Activated CD8-positive, alpha-beta memory T cell treated with anti-CD3 and anti-CD28 coated beads, Interleukin-2, amount 10 ng/mL, durations not matched to agents 7 days and 5 days (primary cell): ENCODE measurements at regions of chr1 and their contacts with region 1.

Region 1: DNA sequence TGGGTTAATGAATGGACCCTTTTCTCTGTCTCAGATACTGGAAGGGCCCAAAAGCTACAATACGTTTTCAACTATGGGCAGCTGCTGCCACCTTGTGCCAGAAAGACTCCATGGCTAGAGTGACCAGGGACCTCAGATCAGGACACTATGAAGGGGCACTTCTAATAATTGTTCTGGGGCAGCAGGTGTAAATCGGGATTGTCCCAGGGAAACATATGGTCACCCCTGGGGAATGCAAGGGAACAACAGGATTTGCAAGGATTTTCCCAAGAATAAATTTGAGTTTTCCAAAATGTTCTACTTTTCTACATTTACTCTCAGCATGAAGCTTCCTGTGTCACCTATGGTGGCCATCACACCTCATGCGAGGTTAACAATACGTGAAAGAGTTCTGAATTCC is 12.0 kb upstream of the FCAMR start:
- DNase-seq: peak; percentile 74
- ATAC-seq: peak; percentile 85
- H3K4me3 Mint-ChIP-seq: no peak overlapping the region
- H3K27ac Mint-ChIP-seq: no peak overlapping the region
- H3K4me1 Mint-ChIP-seq: no peaks in the 10 kb centered on the region
- H3K27me3 Mint-ChIP-seq: peaks cover 40% of the 10 kb centered on the region

Region 2: GRCh38 chr1:206635080-206635977 is 346.9 kb before region 1 on chr1 and contains the start of gene DYRK3:
- CTCF ChIA-PET with region 1: interaction called, 13 read pairs
- DNase-seq: peak; percentile 96
- ATAC-seq: peak; percentile 93
- H3K4me3 Mint-ChIP-seq: peak within 1 kb of the TSS; percentile 76
- H3K27ac Mint-ChIP-seq: peak within 1 kb of the TSS; percentile 91
- H3K4me1 Mint-ChIP-seq: peaks cover 33% of the 10 kb centered on the region
- H3K27me3 Mint-ChIP-seq: peaks cover 19% of the 10 kb centered on the region
- total RNA-seq, gene DYRK3: 9.5 to 12.7 TPM

Region 3: DNA sequence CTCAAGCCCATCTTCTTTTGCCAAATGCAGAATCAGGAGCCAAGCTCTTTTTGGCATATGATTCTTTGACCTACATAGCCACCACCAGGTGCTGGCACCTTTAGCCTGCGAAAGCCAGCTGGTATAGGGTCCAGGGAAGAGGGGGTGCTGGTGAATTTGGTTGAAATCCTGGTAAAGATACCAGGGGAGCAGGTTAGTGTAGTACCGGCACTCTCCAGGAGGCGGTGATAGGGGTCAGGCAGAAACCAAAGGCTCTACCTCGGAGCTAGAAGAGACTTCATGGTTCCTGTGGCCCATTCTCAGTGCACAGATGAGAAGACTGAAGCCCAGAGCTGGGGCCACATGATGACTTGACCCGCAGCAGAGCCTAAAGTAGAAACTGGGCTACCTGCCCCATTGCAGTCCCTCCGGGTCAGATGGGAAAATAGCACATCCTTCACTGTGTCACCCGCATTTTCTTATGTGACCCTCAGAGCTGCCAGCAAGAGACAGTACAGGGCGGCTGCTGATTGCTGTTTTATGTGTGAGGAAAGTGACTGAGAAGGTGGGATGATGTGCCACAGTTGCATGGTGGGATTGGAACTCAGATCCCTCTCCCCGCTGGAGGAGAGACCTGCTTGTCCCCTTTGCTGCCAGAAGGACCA is 247.6 kb before region 1 on chr1:
- CTCF ChIA-PET with region 1: interaction called, 27 read pairs
- DNase-seq: peak; percentile 83
- ATAC-seq: peak; percentile 31
- H3K4me3 Mint-ChIP-seq: no peak overlapping the region
- H3K27ac Mint-ChIP-seq: peak overlapping the region; percentile 21
- H3K4me1 Mint-ChIP-seq: peaks cover 70% of the 10 kb centered on the region
- H3K27me3 Mint-ChIP-seq: no peaks in the 10 kb centered on the region

Region 4: DNA sequence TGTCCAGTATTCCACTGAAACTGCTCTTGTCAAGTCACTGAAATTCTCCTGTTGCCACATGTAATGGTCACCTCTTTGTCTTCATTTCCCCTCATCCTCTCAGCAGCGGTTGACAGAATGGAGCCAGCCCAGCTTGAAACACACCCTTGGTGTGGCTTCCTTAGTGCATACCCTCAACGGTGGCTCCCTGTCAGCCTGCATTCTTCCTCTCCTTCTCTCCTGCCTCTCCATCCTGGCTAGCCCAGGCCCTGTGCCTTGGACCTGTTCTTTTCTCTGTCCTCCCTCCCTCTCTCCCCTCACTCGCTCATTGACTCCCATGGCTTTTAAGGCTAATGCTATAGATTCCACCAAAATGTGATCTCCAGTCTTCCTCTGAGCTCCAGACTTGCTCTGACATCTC is 64.1 kb before region 1 on chr1:
- CTCF ChIA-PET with region 1: interaction called, 79 read pairs
- DNase-seq: no peak
- ATAC-seq: no peak
- H3K4me3 Mint-ChIP-seq: peak overlapping the region; percentile 2
- H3K27ac Mint-ChIP-seq: peak overlapping the region; percentile 10
- H3K4me1 Mint-ChIP-seq: peaks cover 41% of the 10 kb centered on the region
- H3K27me3 Mint-ChIP-seq: no peaks in the 10 kb centered on the region

Region 5: GRCh38 chr1:206935491-206936067 is 46.6 kb before region 1 on chr1:
- CTCF ChIA-PET with region 1: interaction called, 124 read pairs
- DNase-seq: peak; percentile 64
- ATAC-seq: peak; percentile 74
- H3K4me3 Mint-ChIP-seq: no peak overlapping the region
- H3K27ac Mint-ChIP-seq: no peak overlapping the region
- H3K4me1 Mint-ChIP-seq: peaks cover 13% of the 10 kb centered on the region
- H3K27me3 Mint-ChIP-seq: no peaks in the 10 kb centered on the region

Region 6: DNA sequence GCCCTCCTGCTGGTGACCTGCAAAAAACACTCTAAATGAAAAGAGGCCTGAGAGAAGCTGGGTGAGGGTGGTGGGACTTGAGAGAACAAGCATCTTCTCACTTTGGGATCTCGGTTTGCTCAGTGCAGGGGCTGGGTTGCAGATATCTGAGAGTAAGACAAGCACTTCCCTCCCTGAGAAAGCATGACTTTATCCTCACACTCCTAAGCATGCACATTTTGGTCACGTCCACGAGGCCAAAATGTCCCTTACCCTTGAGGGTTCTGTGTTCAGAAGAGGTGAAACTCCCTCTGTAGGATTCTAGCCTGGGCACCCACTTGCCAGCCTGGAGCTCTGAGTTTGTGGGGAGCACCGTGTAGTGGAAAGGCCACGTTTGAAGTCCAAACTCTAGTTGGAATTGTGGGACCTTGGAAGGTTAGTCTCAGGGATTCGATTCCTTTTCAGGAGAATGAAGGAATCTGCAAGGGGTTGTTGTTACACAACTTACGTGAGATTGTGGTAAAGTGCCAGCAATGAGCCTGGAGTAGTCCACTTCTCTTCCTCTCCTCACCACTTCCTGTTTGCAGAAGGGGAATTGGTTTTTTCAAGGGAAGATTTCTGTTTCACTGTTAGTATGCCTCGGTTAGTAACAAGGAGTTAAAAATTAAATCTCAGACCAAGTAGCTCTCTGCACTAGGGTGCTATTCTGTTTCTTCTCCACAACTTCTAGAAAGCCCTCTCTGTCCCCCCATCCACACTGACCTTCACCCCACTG is 14.9 kb before region 1 on chr1:
- CTCF ChIA-PET with region 1: interaction called, 47 read pairs
- DNase-seq: no peak
- ATAC-seq: peak; percentile 39
- H3K4me3 Mint-ChIP-seq: peak overlapping the region; percentile 40
- H3K27ac Mint-ChIP-seq: peak overlapping the region; percentile 50
- H3K4me1 Mint-ChIP-seq: peaks cover 35% of the 10 kb centered on the region
- H3K27me3 Mint-ChIP-seq: peaks cover 30% of the 10 kb centered on the region

Region 7: GRCh38 chr1:207004981-207005830 is 23.0 kb after region 1 on chr1:
- CTCF ChIA-PET with region 1: interaction called, 14 read pairs
- DNase-seq: peak; percentile 48
- ATAC-seq: peak; percentile 61
- H3K4me3 Mint-ChIP-seq: no peak overlapping the region
- H3K27ac Mint-ChIP-seq: no peak overlapping the region
- H3K4me1 Mint-ChIP-seq: no peaks in the 10 kb centered on the region
- H3K27me3 Mint-ChIP-seq: peaks cover 29% of the 10 kb centered on the region